ENCODE measurements at regions of chr1 and their contacts with region 1.

Region 1: GRCh38 chr1:114610546-114611245 is 29.3 kb upstream of the BCAS2 start:
- DNase-seq: peak; percentile 94
- H3K4me3 Mint-ChIP-seq: peak overlapping the region; percentile 72
- H3K27ac Mint-ChIP-seq: peak overlapping the region; percentile 100
- H3K4me1 Mint-ChIP-seq: peaks cover 12% of the 10 kb centered on the region
- H3K27me3 Mint-ChIP-seq: no peaks in the 10 kb centered on the region
- CTCF ChIP-seq: no peak

Region 2: DNA sequence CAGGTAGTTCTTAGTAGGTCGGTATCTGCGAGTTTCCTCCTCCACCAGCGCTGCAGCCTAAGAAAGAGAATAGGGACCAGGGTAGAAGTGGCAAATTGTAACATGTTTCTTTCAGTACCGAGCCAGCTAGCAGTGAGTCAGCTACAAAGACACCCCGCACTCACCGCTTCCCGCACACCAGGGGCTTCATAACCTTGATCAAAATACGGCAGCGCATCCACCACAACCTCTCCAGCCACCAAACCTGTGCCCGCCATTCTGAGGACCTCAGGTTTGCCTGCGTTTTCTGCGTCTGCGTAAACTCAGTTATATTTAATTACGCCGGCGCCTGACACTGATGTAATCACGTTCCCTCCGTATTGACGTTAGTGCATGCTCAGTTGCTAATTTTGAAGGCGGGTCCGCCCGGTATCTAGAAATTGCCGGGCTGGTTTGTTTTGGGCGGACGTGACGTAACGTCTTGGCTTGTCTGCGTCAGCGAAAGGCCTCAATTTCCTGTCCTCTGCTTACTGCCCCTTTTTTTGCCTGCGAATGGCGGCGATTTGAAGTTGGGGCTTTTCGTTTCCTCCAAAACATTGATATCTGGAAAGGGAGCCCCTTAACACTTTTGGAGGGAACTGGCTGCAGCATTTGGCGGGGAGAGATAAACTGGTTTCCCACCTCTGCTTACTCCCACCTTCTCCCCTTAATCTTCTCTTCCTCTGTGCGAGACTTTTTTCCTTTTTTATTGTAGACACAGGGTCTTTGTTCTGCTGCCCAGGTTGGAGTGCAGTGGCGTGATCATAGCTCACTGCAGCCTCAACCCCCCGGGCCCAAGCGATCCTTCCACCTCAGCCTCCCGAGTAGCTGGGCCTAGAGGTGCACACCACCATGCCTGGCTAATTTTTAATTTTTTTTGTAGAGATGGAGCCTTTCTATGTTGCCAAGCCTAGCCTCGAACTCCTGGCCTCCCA is 29.1 kb before region 1 on chr1 and contains the start of gene BCAS2:
- CTCF ChIA-PET with region 1: interaction called, 3 read pairs
- POLR2A ChIA-PET with region 1: interaction called, 43 read pairs
- intact Hi-C with region 1: no loop called
- DNase-seq: peak; percentile 98
- H3K4me3 Mint-ChIP-seq: peak within 1 kb of the TSS; percentile 98
- H3K27ac Mint-ChIP-seq: peak within 1 kb of the TSS; percentile 99
- H3K4me1 Mint-ChIP-seq: peaks cover 6% of the 10 kb centered on the region
- H3K27me3 Mint-ChIP-seq: no peaks in the 10 kb centered on the region
- CTCF ChIP-seq: no peak
- total RNA-seq, gene BCAS2: 85.4 and 97.2 TPM in 2 replicates

Region 3: DNA sequence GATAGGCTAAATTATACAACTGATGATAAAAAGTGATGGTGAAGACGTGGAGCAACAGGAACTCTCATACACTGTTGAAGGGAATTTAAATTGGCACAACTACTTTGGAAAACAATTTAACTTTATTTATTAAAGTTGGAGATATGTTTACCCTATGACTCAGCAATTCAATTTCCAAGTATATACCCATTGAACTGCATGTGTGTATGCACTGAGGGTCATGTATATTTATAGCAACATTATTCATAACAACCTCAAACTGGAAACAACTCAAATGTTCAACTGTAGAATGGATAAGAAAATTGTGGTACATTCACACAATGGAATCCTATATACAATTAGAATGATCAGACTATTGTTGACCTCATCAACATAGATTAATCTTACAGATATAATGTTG is 12.7 kb before region 1 on chr1:
- CTCF ChIA-PET with region 1: interaction called, 4 read pairs
- POLR2A ChIA-PET with region 1: interaction called, 12 read pairs
- intact Hi-C with region 1: no loop called
- DNase-seq: no peak
- H3K4me3 Mint-ChIP-seq: no peak overlapping the region
- H3K27ac Mint-ChIP-seq: no peak overlapping the region
- H3K4me1 Mint-ChIP-seq: no peaks in the 10 kb centered on the region
- H3K27me3 Mint-ChIP-seq: no peaks in the 10 kb centered on the region
- CTCF ChIP-seq: no peak

Region 4: GRCh38 chr1:114627107-114627506 is 16.4 kb after region 1 on chr1:
- CTCF ChIA-PET with region 1: interaction called, 11 read pairs
- POLR2A ChIA-PET with region 1: interaction called, 5 read pairs
- intact Hi-C with region 1: no loop called
- DNase-seq: no peak
- H3K4me3 Mint-ChIP-seq: no peak overlapping the region
- H3K27ac Mint-ChIP-seq: no peak overlapping the region
- H3K4me1 Mint-ChIP-seq: peaks cover 5% of the 10 kb centered on the region
- H3K27me3 Mint-ChIP-seq: no peaks in the 10 kb centered on the region
- CTCF ChIP-seq: no peak